HEK293 (cell line): ENCODE measurements at regions of chr1 and their contacts with region 1.

Region 1: GRCh38 chr1:211908453-211908852 is 77.9 kb upstream of the LPGAT1 start:
- H3K4me3 ChIP-seq: no peak overlapping the region
- H3K27ac ChIP-seq: no peak overlapping the region
- H3K4me1 ChIP-seq: peaks cover 4% of the 10 kb centered on the region
- CTCF ChIP-seq: no peak

Region 2: DNA sequence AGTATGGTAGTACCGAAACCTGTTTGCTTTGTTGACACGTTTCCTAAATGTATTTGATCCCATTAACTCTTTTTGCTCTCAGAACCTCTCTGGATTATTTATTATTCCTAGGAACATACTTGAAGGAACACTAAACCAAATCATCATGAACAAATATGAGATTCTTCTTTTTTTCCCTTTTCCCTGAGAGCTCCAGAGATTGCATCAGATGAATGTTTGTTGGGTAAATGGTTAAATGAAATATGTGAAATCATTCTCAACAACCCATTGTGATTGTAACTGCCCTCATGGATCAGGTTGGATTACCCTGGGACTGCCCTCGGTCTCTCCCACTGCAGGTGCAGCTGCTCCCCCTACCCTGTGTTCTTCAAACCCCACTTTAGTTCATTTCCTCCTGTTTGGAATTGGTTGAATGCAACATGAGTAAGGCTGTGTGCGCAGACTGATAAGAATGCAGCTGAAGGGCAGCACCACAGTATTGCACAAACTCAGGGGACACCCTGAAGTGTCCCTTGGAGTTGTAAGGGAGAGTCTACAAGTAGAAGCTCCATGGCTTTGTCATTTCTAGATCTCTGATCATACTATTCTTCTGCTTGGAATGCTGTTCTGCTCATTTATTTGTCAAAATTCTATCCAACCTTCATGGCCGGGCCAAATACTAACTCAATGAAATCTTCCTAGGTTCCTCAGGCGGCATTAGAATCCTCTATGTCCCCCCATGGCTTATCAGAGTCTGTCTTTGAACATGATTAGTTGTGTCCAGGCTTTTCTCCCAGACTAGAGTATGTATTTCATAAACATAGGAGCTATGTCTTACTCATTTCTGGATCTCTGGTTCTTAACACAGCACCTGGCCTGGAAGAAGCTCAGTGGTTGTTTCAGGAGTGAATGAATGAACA is 185.9 kb before region 1 on chr1:
- CTCF ChIA-PET with region 1: no interaction called
- POLR2A ChIA-PET with region 1: interaction called, 16 read pairs
- H3K4me3 ChIP-seq: no peak overlapping the region
- H3K27ac ChIP-seq: no peak overlapping the region
- H3K4me1 ChIP-seq: no peaks in the 10 kb centered on the region
- CTCF ChIP-seq: no peak